ENCODE measurements at regions of chr11 and their contacts with region 1.

Region 1: GRCh38 chr11:133913761-133914160 is 43.0 kb downstream of the IGSF9B start:
- DNase-seq: no peak
- ATAC-seq: no peak
- H3K4me3 Mint-ChIP-seq: no peak overlapping the region
- H3K27ac Mint-ChIP-seq: no peak overlapping the region
- H3K4me1 Mint-ChIP-seq: peaks cover 2% of the 10 kb centered on the region
- H3K27me3 Mint-ChIP-seq: no peaks in the 10 kb centered on the region

Region 2: GRCh38 chr11:134398079-134398444 is 484.3 kb after region 1 on chr11:
- CTCF ChIA-PET with region 1: no interaction called
- POLR2A ChIA-PET with region 1: interaction called, 10 read pairs
- intact Hi-C with region 1: no loop called
- DNase-seq: no peak
- ATAC-seq: no peak
- H3K4me3 Mint-ChIP-seq: no peak overlapping the region
- H3K27ac Mint-ChIP-seq: no peak overlapping the region
- H3K4me1 Mint-ChIP-seq: no peaks in the 10 kb centered on the region
- H3K27me3 Mint-ChIP-seq: peaks cover 16% of the 10 kb centered on the region